ENCODE measurements at regions of chr10 and their contacts with region 1.

Region 1: GRCh38 chr10:61750929-61751471 is 88.3 kb downstream of the CABCOCO1 start:
- DNase-seq: peak; percentile 93 to 94
- H3K4me3 ChIP-seq: no peak overlapping the region
- H3K4me3 Mint-ChIP-seq: peak overlapping the region; percentile 27
- H3K27ac Mint-ChIP-seq: peak overlapping the region; percentile 83
- H3K4me1 ChIP-seq: peaks cover 65% of the 10 kb centered on the region
- H3K4me1 Mint-ChIP-seq: peaks cover 54% of the 10 kb centered on the region
- H3K27me3 ChIP-seq: no peaks in the 10 kb centered on the region
- H3K27me3 Mint-ChIP-seq: no peaks in the 10 kb centered on the region
- CTCF ChIP-seq: peak; percentile 92 to 98

Region 2: DNA sequence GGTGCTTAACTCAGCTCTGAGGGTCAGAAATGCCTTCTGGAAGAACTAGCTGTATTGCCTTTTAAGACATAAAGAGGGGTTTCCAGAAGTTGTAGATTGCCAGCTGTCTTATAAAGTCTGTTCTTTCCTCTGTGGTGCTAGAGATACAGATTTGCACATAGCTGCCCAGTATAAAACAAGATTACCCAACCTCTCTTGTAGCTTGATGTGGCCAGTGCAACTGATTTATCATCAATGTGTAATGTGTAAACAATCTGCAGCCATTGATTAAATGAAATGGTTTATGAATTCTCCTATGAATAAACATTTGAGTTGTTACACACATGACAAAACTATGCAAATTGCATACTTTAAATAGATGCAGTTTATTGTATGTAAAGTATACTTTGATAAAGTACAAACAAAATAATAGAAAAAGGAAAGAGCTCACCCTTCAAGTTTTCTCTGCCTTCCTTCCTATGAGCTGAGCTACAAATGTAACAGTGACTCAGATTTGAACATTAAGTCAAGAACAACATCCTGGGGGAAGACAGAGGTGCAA is 493.0 kb before region 1 on chr10:
- CTCF ChIA-PET with region 1: no interaction called
- POLR2A ChIA-PET with region 1: no interaction called
- intact Hi-C with region 1: no loop called
- DNase-seq: no peak
- H3K4me3 ChIP-seq: no peak overlapping the region
- H3K4me3 Mint-ChIP-seq: no peak overlapping the region
- H3K27ac Mint-ChIP-seq: no peak overlapping the region
- H3K4me1 ChIP-seq: no peaks in the 10 kb centered on the region
- H3K4me1 Mint-ChIP-seq: no peaks in the 10 kb centered on the region
- H3K27me3 ChIP-seq: no peaks in the 10 kb centered on the region
- H3K27me3 Mint-ChIP-seq: peaks cover 27% of the 10 kb centered on the region
- CTCF ChIP-seq: no peak

Region 3: GRCh38 chr10:61688551-61689308 is 62.3 kb before region 1 on chr10:
- CTCF ChIA-PET with region 1: no interaction called
- POLR2A ChIA-PET with region 1: no interaction called
- intact Hi-C with region 1: no loop called
- DNase-seq: no peak
- H3K4me3 ChIP-seq: no peak overlapping the region
- H3K4me3 Mint-ChIP-seq: no peak overlapping the region
- H3K27ac Mint-ChIP-seq: no peak overlapping the region
- H3K4me1 ChIP-seq: no peaks in the 10 kb centered on the region
- H3K4me1 Mint-ChIP-seq: no peaks in the 10 kb centered on the region
- H3K27me3 ChIP-seq: no peaks in the 10 kb centered on the region
- H3K27me3 Mint-ChIP-seq: peaks cover 3% of the 10 kb centered on the region
- CTCF ChIP-seq: no peak

Region 4: DNA sequence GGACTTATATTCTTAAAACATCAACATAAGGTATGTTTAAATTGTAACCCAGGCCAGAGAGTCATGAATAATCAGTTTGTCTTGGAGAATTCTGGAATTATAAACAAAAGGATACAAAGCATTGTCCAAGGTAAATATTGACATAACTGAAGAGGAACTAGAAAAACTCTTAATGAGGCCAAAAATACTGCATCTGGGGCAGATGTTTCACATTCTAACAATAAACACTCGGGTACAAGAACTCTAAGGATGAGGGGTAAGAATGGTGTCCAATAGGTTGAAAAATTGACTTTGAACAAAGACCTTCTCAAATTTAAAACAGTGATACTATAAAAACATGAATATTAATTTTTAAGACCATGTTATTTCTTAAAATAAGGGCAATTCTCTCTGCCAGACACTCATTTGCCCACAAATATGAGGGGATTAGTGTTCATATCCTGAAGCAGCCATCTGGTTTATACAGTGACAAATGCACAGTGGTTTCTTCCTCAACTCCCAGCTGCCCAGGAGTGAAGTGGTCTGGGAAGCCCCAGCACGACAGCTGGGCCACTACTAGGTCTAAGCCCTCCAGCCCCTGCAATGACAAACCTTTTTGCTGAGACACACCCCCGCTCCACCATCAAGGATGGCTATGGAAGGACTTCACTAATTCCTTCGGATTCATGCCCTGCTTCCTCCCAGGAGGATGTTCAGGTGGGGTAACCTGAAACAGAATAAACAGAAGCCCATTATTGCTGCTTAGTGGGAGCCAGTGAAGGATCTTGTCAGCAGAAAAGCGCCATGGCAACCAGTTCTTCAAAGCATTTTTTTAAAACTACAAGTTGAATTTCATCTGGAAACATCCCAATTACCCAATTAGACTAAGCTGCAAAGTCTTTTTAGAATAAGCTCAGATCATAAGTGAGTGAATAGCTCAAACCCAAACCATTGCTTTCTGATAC is 43.0 kb after region 1 on chr10:
- CTCF ChIA-PET with region 1: interaction called, 5 read pairs
- POLR2A ChIA-PET with region 1: interaction called, 3 read pairs
- intact Hi-C with region 1: loop called (anchors 2 kb)
- DNase-seq: no peak
- H3K4me3 ChIP-seq: no peak overlapping the region
- H3K4me3 Mint-ChIP-seq: no peak overlapping the region
- H3K27ac Mint-ChIP-seq: no peak overlapping the region
- H3K4me1 ChIP-seq: peaks cover 23% of the 10 kb centered on the region
- H3K4me1 Mint-ChIP-seq: peaks cover 22% of the 10 kb centered on the region
- H3K27me3 ChIP-seq: no peaks in the 10 kb centered on the region
- H3K27me3 Mint-ChIP-seq: no peaks in the 10 kb centered on the region
- CTCF ChIP-seq: no peak

Region 5: GRCh38 chr10:61852261-61852660 is 101.3 kb after region 1 on chr10:
- CTCF ChIA-PET with region 1: interaction called, 3 read pairs
- POLR2A ChIA-PET with region 1: no interaction called
- intact Hi-C with region 1: loop called (anchors 1 kb)
- DNase-seq: no peak
- H3K4me3 ChIP-seq: no peak overlapping the region
- H3K4me3 Mint-ChIP-seq: no peak overlapping the region
- H3K27ac Mint-ChIP-seq: peak overlapping the region; percentile 51
- H3K4me1 ChIP-seq: peaks cover 46% of the 10 kb centered on the region
- H3K4me1 Mint-ChIP-seq: peaks cover 44% of the 10 kb centered on the region
- H3K27me3 ChIP-seq: no peaks in the 10 kb centered on the region
- H3K27me3 Mint-ChIP-seq: no peaks in the 10 kb centered on the region
- CTCF ChIP-seq: no peak

Region 6: DNA sequence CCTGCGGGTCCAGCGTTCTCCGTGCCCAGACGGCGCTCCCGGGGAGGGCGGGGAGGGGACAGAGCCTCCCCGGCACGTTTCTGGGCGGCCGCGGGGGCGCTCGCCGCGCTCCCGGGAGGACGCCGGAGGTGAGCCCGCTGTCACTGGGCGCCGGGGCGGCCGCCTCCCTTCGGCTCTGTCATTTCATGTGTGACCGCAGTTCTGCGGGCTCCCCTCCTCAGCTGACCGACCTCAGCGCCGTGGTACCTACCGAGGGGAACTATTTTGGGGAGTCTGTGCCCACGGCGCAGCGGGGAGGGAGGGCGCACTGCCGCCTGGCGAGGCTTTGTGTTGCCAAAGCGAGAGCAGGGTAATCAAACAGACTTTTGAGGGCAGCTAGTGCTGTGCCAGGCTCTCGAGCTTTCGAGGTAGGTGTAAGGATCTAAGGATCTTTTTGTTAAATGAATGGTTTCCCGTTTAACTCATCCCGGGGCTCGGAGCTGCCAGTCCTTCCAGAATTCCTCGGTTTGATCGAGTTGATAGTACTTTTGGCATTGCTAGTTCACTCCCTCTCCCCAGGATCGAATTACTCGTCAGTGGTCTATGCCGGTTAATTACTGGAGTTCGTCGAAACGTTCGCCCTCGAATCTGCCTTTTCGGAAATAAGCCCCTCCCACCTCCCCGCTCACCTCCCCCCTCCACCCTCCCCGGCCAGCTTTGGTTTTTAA is 152.4 kb after region 1 on chr10:
- CTCF ChIA-PET with region 1: interaction called, 24 read pairs
- POLR2A ChIA-PET with region 1: interaction called, 9 read pairs
- intact Hi-C with region 1: loop called (anchors 1 kb)
- DNase-seq: peak in 1 of 2 experiments; percentile 84
- H3K4me3 ChIP-seq: peak overlapping the region; percentile 97
- H3K4me3 Mint-ChIP-seq: peak overlapping the region; percentile 89
- H3K27ac Mint-ChIP-seq: peak overlapping the region; percentile 99
- H3K4me1 ChIP-seq: peaks cover 57% of the 10 kb centered on the region
- H3K4me1 Mint-ChIP-seq: peaks cover 34% of the 10 kb centered on the region
- H3K27me3 ChIP-seq: no peaks in the 10 kb centered on the region
- H3K27me3 Mint-ChIP-seq: no peaks in the 10 kb centered on the region
- CTCF ChIP-seq: peak; percentile 14 to 16

Region 7: GRCh38 chr10:62038609-62039190 is 287.7 kb after region 1 on chr10:
- CTCF ChIA-PET with region 1: interaction called, 20 read pairs
- POLR2A ChIA-PET with region 1: no interaction called
- intact Hi-C with region 1: loop called (anchors 5 kb)
- DNase-seq: peak; percentile 84 to 85
- H3K4me3 ChIP-seq: no peak overlapping the region
- H3K4me3 Mint-ChIP-seq: peak overlapping the region; percentile 50
- H3K27ac Mint-ChIP-seq: peak overlapping the region; percentile 56
- H3K4me1 ChIP-seq: peaks cover 95% of the 10 kb centered on the region
- H3K4me1 Mint-ChIP-seq: peaks cover 93% of the 10 kb centered on the region
- H3K27me3 ChIP-seq: no peaks in the 10 kb centered on the region
- H3K27me3 Mint-ChIP-seq: no peaks in the 10 kb centered on the region
- CTCF ChIP-seq: peak; percentile 93 to 98

Region 8: DNA sequence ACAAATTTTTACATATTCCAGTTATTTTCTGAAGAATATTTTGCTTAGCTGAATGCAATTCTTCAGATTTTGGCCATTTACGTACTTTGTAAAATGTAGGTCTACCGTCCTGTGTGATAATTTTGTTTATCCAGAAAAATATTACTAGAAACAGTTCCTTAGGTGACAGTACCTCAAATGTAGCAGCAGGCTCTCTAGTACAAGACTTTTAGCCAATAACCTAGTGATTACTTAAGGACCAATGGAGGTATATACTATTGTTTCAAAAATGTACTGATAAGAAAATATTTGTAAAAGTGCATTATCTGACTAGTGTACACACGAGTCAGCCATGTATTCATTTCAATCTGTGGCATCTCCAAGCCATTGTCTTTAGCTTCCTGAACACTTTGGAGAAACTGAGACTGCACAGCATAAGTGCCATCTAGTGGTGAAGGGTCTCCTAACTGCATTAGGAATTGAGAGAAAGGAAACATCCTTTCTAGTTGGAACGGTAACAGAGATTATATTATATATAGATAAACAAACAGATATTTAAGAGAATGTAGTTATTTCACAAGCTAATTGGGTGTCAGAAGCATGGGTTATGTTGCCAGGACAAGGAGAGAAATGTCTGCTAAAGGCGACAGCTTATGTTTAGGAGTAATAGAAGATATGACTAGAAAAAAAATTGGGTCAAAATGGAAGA is 493.9 kb after region 1 on chr10:
- CTCF ChIA-PET with region 1: interaction called, 16 read pairs
- POLR2A ChIA-PET with region 1: no interaction called
- intact Hi-C with region 1: loop called (anchors 2 kb)
- DNase-seq: peak; percentile 70 to 82
- H3K4me3 ChIP-seq: no peak overlapping the region
- H3K4me3 Mint-ChIP-seq: no peak overlapping the region
- H3K27ac Mint-ChIP-seq: peak overlapping the region; percentile 33
- H3K4me1 ChIP-seq: peaks cover 25% of the 10 kb centered on the region
- H3K4me1 Mint-ChIP-seq: peaks cover 39% of the 10 kb centered on the region
- H3K27me3 ChIP-seq: no peaks in the 10 kb centered on the region
- H3K27me3 Mint-ChIP-seq: no peaks in the 10 kb centered on the region
- CTCF ChIP-seq: peak; percentile 95 to 98